Sigmoid colon (tissue), 7 donors: ENCODE measurements at regions of chr7 and their contacts with region 1.

Region 1: GRCh38 chr7:155009570-155010157 is 6.7 kb upstream of the PAXIP1 start:
- DNase-seq: no peak
- H3K4me3 ChIP-seq: no peak overlapping the region
- H3K27ac ChIP-seq: no peak overlapping the region
- H3K4me1 ChIP-seq: peaks cover 0 to 4% (median 3%) of the 10 kb centered on the region in 4 donors
- H3K27me3 ChIP-seq: no peaks in the 10 kb centered on the region
- CTCF ChIP-seq: no peak
- EP300 ChIP-seq: no peak
- POLR2A ChIP-seq: no peak

Region 2: GRCh38 chr7:154777023-154777422 is 232.6 kb before region 1 on chr7:
- intact Hi-C with region 1: no loop called
- DNase-seq: no peak
- H3K4me3 ChIP-seq: no peak overlapping the region
- H3K27ac ChIP-seq: no peak overlapping the region
- H3K4me1 ChIP-seq: no peaks in the 10 kb centered on the region
- H3K27me3 ChIP-seq: no peaks in the 10 kb centered on the region
- CTCF ChIP-seq: no peak
- EP300 ChIP-seq: no peak
- POLR2A ChIP-seq: no peak

Region 3: GRCh38 chr7:154892462-154892861 is 117.2 kb before region 1 on chr7:
- intact Hi-C with region 1: no loop called
- DNase-seq: no peak
- H3K4me3 ChIP-seq: no peak overlapping the region
- H3K27ac ChIP-seq: no peak overlapping the region
- H3K4me1 ChIP-seq: no peaks in the 10 kb centered on the region
- H3K27me3 ChIP-seq: peaks cover 0 to 3% (median 0%) of the 10 kb centered on the region in 3 donors
- CTCF ChIP-seq: no peak
- EP300 ChIP-seq: no peak
- POLR2A ChIP-seq: no peak

Region 4: GRCh38 chr7:155090684-155091083 is 81.0 kb after region 1 on chr7:
- intact Hi-C with region 1: no loop called
- DNase-seq: no peak
- H3K4me3 ChIP-seq: no peak overlapping the region
- H3K27ac ChIP-seq: no peak overlapping the region
- H3K4me1 ChIP-seq: no peaks in the 10 kb centered on the region
- H3K27me3 ChIP-seq: peaks cover 0 to 6% (median 3%) of the 10 kb centered on the region in 3 donors
- CTCF ChIP-seq: no peak
- EP300 ChIP-seq: no peak
- POLR2A ChIP-seq: no peak

Region 5: GRCh38 chr7:155205368-155206317 is 196.0 kb after region 1 on chr7:
- intact Hi-C with region 1: loop called (anchors 5 kb)
- DNase-seq: peak; percentile 95
- H3K4me3 ChIP-seq: peak overlapping the region; percentile 6 to 44 (median 36)
- H3K27ac ChIP-seq: peak overlapping the region; percentile 56 to 71 (median 66)
- H3K4me1 ChIP-seq: peaks cover 0 to 15% (median 8%) of the 10 kb centered on the region in 4 donors
- H3K27me3 ChIP-seq: peaks cover 0 to 9% (median 0%) of the 10 kb centered on the region in 3 donors
- CTCF ChIP-seq: no peak
- EP300 ChIP-seq: peak in 1 of 4 donors; percentile 36
- POLR2A ChIP-seq: no peak